IMR-90 (cell line): ENCODE measurements at regions of chr22 and their contacts with region 1.

Region 1: DNA sequence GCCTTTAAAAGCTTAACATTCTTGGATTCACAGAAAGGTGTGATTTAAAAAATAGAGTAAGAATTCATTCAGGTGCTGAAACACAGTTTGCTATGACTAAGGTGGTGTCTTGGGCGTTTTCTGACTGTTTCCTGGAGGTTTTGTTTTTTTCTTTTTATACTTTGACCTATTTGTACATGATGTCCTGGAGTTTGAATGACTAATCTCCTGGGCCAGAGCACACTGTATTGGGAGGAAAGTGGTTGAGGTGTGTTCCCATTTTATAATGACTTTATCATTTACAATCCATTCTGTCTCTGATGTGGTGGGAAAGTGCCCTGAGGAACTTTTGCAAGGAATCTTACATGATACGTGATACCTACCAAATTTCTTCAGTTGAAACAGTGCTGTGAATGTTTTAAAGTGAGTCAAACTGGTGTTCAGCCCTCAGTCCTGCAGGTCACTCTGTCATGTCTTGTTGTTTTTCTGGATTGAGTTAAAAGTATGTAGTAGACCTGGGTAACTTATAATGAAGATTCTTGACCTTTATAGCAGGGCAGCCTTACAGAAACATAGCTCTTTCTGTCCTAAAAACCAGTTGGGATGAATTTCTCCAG is 80.8 kb downstream of the TNRC6B start:
- DNase-seq: peak; percentile 40
- ATAC-seq: peak; percentile 51; the same call in 1 of the 2 replicates
- H3K4me3 ChIP-seq: no peak overlapping the region
- H3K27ac ChIP-seq: no peak overlapping the region
- H3K4me1 ChIP-seq: peaks cover 9% of the 10 kb centered on the region; the same call in 1 of the 2 replicates
- H3K27me3 ChIP-seq: no peaks in the 10 kb centered on the region
- CTCF ChIP-seq: no peak
- POLR2A ChIP-seq: no peak
- RAD21 ChIP-seq: no peak

Region 2: GRCh38 chr22:40067639-40068038 is 190.9 kb before region 1 on chr22:
- CTCF ChIA-PET with region 1: no interaction called
- POLR2A ChIA-PET with region 1: no interaction called
- dilution Hi-C with region 1: no loop called
- in situ Hi-C with region 1: loop called (anchors 10 kb)
- intact Hi-C with region 1: loop called (anchors 10 kb)
- DNase-seq: no peak
- ATAC-seq: no peak
- H3K4me3 ChIP-seq: no peak overlapping the region
- H3K27ac ChIP-seq: no peak overlapping the region
- H3K4me1 ChIP-seq: no peaks in the 10 kb centered on the region
- H3K27me3 ChIP-seq: no peaks in the 10 kb centered on the region
- CTCF ChIP-seq: no peak
- POLR2A ChIP-seq: no peak
- RAD21 ChIP-seq: no peak

Region 3: GRCh38 chr22:40084246-40084645 is 174.3 kb before region 1 on chr22:
- CTCF ChIA-PET with region 1: no interaction called
- POLR2A ChIA-PET with region 1: no interaction called
- dilution Hi-C with region 1: no loop called
- in situ Hi-C with region 1: loop called (anchors 10 kb)
- intact Hi-C with region 1: no loop called
- DNase-seq: no peak
- ATAC-seq: no peak
- H3K4me3 ChIP-seq: no peak overlapping the region
- H3K27ac ChIP-seq: no peak overlapping the region
- H3K4me1 ChIP-seq: no peaks in the 10 kb centered on the region
- H3K27me3 ChIP-seq: peaks cover 14% of the 10 kb centered on the region
- CTCF ChIP-seq: no peak
- POLR2A ChIP-seq: no peak
- RAD21 ChIP-seq: no peak

Region 4: DNA sequence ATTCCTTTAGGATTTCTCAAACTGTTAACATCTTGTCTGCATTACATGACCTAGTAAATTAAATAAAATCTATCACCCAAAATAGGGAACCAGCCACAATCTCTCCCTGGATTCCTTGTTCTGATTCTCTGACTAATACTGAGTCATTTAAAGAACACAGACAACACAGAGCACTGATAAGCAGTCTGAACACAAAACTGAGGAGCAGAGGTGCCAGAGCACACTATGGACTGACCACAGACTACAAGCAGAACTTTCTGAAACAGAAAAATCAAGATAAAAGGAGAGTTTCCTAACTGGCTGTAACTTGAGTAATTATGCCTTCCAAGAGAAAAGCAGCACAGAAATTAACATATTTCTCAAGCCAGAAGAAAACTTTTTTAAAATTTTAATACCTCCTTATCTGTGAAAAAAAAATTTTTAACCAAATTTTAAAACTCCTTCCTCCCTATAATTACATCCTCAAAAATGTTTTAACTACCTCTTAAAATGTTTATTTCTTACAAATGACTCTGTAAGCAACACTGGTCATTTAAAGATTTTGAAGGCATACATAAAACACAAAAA is 240.7 kb after region 1 on chr22:
- CTCF ChIA-PET with region 1: no interaction called
- POLR2A ChIA-PET with region 1: no interaction called
- dilution Hi-C with region 1: no loop called
- in situ Hi-C with region 1: no loop called
- intact Hi-C with region 1: no loop called
- DNase-seq: peak; percentile 99
- ATAC-seq: peak; percentile 87
- H3K4me3 ChIP-seq: no peak overlapping the region
- H3K27ac ChIP-seq: peak overlapping the region; percentile 94; the same call in 1 of the 2 replicates
- H3K4me1 ChIP-seq: peaks cover 15% of the 10 kb centered on the region
- H3K27me3 ChIP-seq: no peaks in the 10 kb centered on the region
- CTCF ChIP-seq: no peak
- POLR2A ChIP-seq: peak; percentile 69
- RAD21 ChIP-seq: peak; percentile 35